ENCODE measurements at regions of chr2 and their contacts with region 1.

Region 1: GRCh38 chr2:233443468-233444183 is 89.3 kb downstream of the DGKD start:
- DNase-seq: peak; percentile 53
- ATAC-seq: peak; percentile 82
- H3K4me3 ChIP-seq: no peak overlapping the region
- H3K27ac ChIP-seq: no peak overlapping the region
- H3K4me1 ChIP-seq: no peaks in the 10 kb centered on the region
- H3K27me3 ChIP-seq: no peaks in the 10 kb centered on the region
- CTCF ChIP-seq: peak; percentile 70 to 90 (median 86)
- POLR2A ChIP-seq: no peak
- RAD21 ChIP-seq: peak; percentile 95

Region 2: DNA sequence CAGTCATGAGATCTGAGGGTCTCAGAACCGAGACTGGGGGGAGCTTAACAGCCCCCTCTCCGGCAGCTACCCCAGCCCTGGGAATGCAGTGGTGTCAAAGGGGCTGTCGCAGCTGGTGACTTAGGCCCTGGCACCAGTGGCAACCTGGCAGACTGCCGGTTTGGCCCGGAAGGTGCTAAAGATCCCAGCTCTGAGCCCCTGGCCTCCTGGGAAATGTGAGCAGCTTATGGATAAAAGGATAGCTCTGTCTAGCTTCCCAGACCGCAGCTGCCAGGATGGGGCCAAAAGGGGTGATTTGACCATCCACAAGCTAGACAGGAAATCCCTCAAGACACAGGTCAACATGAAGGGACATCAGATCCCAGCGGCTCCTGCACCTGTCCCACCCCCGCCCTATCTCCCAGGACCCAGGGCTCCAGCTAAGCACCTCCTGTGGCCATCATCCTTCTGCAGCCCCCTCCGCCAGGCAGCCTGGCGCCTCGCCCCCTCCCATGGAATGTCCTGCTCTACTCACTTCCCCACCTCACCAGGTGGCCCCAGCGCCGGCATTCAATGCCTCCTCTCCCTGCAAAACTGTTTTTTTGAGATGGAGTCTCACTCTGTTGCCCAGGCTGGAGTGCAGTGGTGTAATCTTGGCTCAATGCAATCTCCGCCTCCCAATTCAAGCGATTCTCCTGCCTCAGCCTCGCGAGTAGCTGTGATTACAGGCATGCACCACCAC is 843.4 kb before region 1 on chr2:
- CTCF ChIA-PET with region 1: no interaction called
- POLR2A ChIA-PET with region 1: no interaction called
- RAD21 ChIA-PET with region 1: no interaction called
- intact Hi-C with region 1: loop called (anchors 10 kb)
- DNase-seq: no peak
- ATAC-seq: no peak
- H3K4me3 ChIP-seq: no peak overlapping the region
- H3K27ac ChIP-seq: no peak overlapping the region
- H3K4me1 ChIP-seq: no peaks in the 10 kb centered on the region
- H3K27me3 ChIP-seq: no peaks in the 10 kb centered on the region
- CTCF ChIP-seq: no peak
- POLR2A ChIP-seq: no peak
- RAD21 ChIP-seq: no peak

Region 3: GRCh38 chr2:233288719-233289118 is 154.9 kb before region 1 on chr2:
- CTCF ChIA-PET with region 1: no interaction called
- POLR2A ChIA-PET with region 1: no interaction called
- RAD21 ChIA-PET with region 1: no interaction called
- intact Hi-C with region 1: loop called (anchors 10 kb)
- DNase-seq: no peak
- ATAC-seq: no peak
- H3K4me3 ChIP-seq: no peak overlapping the region
- H3K27ac ChIP-seq: no peak overlapping the region; the same call in 1 of the 2 replicates
- H3K4me1 ChIP-seq: no peaks in the 10 kb centered on the region
- H3K27me3 ChIP-seq: no peaks in the 10 kb centered on the region
- CTCF ChIP-seq: no peak
- POLR2A ChIP-seq: no peak
- RAD21 ChIP-seq: no peak

Region 4: DNA sequence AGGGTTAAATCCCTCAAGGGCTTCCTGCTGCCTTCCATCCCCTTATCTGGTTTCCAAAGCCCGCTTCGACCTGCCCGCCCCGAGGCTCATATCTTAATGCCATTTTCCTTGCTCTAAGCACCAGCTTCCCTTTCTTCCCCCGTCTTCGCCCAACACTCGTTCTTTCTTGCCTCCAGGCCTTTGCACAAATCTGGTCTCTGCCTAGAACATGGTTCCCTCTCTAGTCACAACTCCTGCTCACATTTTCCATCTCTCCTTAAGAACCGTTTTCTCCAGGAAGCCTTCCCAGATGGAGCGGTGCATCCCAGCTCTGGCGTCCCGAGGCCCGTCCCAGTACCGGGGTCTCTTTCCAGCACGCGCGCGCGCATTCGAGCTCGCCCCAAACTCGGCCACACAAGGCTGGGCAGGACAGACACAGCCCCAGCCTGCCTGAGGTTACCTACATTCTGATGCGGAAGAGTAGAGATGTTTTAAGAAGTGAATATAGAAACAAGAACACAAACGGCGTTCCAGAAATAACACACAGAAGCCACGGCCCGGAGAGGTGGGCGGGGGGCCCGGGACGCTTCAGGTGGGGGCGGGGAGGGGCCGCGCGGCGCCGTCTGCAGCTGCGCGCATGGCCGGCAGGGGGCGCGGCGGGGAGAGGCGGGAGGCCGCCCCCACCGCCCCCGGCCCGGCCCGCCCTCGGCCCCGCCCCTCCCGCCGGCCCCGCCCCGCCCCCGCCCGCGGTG is 89.7 kb before region 1 on chr2 and contains the start of gene DGKD:
- CTCF ChIA-PET with region 1: no interaction called
- POLR2A ChIA-PET with region 1: no interaction called
- RAD21 ChIA-PET with region 1: no interaction called
- intact Hi-C with region 1: loop called (anchors 2 kb)
- DNase-seq: peak; percentile 29
- ATAC-seq: peak; percentile 71
- H3K4me3 ChIP-seq: peak within 1 kb of the TSS; percentile 65 to 82
- H3K27ac ChIP-seq: peak within 1 kb of the TSS; percentile 80
- H3K4me1 ChIP-seq: peaks cover 37 to 63% of the 10 kb centered on the region in 2 experiments
- H3K27me3 ChIP-seq: no peaks in the 10 kb centered on the region
- CTCF ChIP-seq: peak in 2 of 3 experiments; percentile 14 to 34; a peak in 2 of 6 replicates
- POLR2A ChIP-seq: no peak
- RAD21 ChIP-seq: no peak
- total RNA-seq, gene DGKD: 52.0 TPM

Region 5: GRCh38 chr2:233404222-233404621 is 39.4 kb before region 1 on chr2:
- CTCF ChIA-PET with region 1: interaction called, 73 read pairs
- POLR2A ChIA-PET with region 1: no interaction called
- RAD21 ChIA-PET with region 1: interaction called in 1 of 2 experiments, 5 read pairs
- intact Hi-C with region 1: loop called (anchors 1 kb)
- DNase-seq: peak; percentile 32
- ATAC-seq: peak; percentile 88
- H3K4me3 ChIP-seq: no peak overlapping the region
- H3K27ac ChIP-seq: no peak overlapping the region
- H3K4me1 ChIP-seq: no peaks in the 10 kb centered on the region
- H3K27me3 ChIP-seq: no peaks in the 10 kb centered on the region
- CTCF ChIP-seq: peak; percentile 79 to 93 (median 91)
- POLR2A ChIP-seq: no peak
- RAD21 ChIP-seq: peak; percentile 88

Region 6: GRCh38 chr2:233414777-233415570 is 28.7 kb before region 1 on chr2:
- CTCF ChIA-PET with region 1: interaction called, 13 read pairs
- POLR2A ChIA-PET with region 1: no interaction called
- RAD21 ChIA-PET with region 1: interaction called, 3 to 5 read pairs
- intact Hi-C with region 1: no loop called
- DNase-seq: peak; percentile 43
- ATAC-seq: peak; percentile 44
- H3K4me3 ChIP-seq: peak overlapping the region in 1 of 2 experiments; percentile 33; a peak in 2 of 4 replicates
- H3K27ac ChIP-seq: peak overlapping the region; percentile 82
- H3K4me1 ChIP-seq: peaks cover 58 to 79% of the 10 kb centered on the region in 2 experiments
- H3K27me3 ChIP-seq: no peaks in the 10 kb centered on the region
- CTCF ChIP-seq: no peak
- POLR2A ChIP-seq: no peak
- RAD21 ChIP-seq: no peak